ENCODE measurements at regions of chr22 and their contacts with region 1.

Region 1: DNA sequence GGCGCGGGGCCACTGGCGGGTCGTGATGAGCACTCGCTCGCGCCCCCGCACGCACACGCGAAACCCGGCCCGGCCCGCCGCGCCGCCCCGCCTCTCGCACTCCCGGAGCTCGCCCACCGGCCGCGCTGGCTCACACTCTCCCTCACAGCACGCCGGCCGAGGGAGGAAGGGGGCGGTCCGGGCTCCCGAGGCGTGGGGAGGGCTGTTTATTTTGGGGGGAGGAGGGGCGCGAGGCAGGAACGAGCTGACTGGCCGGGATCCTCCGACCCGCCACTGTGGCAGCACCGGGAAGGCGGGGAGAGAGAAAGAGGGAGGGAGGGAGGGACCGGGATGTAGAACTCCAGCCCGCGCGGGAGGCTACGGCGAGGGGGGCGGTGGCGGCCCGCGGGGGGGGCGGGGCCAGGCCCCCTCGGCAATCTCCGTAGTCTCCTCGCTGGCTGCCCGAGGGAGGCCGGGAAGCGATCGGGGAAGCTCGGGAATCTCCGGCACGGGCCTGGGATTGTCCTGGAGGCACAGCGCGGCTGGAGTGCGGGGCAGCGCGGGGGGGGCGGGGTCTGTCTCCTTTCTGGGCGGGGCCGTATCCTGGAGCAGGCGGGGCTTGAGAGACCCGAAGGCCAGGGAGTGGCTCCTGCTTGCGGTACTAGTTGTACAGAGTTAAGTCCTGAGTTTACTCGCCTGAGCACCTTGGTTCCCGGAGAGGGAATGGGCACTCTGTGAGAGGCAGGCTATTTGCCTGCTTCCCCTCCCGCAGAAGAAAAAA is at the start of gene RBFOX2:
- DNase-seq: peak; percentile 95
- ATAC-seq: peak; percentile 93
- H3K4me3 ChIP-seq: peak within 1 kb of the TSS; percentile 98
- H3K27ac ChIP-seq: peak within 1 kb of the TSS; percentile 95
- H3K4me1 ChIP-seq: peaks cover 4% of the 10 kb centered on the region
- H3K27me3 ChIP-seq: no peaks in the 10 kb centered on the region
- CTCF ChIP-seq: no peak
- POLR2A ChIP-seq: peak; percentile 52; the same call in 1 of the 2 replicates
- RAD21 ChIP-seq: no peak
- total RNA-seq, gene RBFOX2: 178 and 227 TPM in 2 replicates

Region 2: GRCh38 chr22:35008213-35008612 is 1020.6 kb before region 1 on chr22:
- CTCF ChIA-PET with region 1: no interaction called
- POLR2A ChIA-PET with region 1: no interaction called
- dilution Hi-C with region 1: no loop called
- in situ Hi-C with region 1: no loop called
- intact Hi-C with region 1: no loop called
- DNase-seq: no peak
- ATAC-seq: no peak
- H3K4me3 ChIP-seq: no peak overlapping the region
- H3K27ac ChIP-seq: no peak overlapping the region
- H3K4me1 ChIP-seq: no peaks in the 10 kb centered on the region
- H3K27me3 ChIP-seq: no peaks in the 10 kb centered on the region
- CTCF ChIP-seq: no peak
- POLR2A ChIP-seq: no peak
- RAD21 ChIP-seq: no peak

Region 3: DNA sequence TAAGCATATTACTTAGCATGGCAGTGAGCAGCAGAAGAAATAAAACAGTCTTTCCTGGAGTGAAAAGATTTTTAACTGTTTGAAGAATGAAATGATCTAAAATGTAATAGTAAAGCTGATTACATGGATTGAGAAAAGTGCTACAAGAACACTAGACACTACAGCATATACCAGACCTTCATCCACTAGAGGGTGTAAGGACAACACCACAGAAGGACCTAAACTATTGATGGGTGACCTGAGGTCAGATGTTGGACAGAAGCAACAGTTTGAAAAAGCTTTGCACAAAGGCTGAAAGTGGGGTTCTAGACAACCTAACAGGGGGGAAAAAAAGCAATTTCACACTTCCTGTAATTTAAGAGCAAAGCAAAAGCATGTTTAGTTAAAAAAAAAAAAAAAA is 97.9 kb before region 1 on chr22:
- CTCF ChIA-PET with region 1: no interaction called
- POLR2A ChIA-PET with region 1: no interaction called
- dilution Hi-C with region 1: no loop called
- in situ Hi-C with region 1: no loop called
- intact Hi-C with region 1: loop called (anchors 2 kb)
- DNase-seq: peak; percentile 80
- ATAC-seq: peak; percentile 94
- H3K4me3 ChIP-seq: no peak overlapping the region
- H3K27ac ChIP-seq: no peak overlapping the region
- H3K4me1 ChIP-seq: peaks cover 4% of the 10 kb centered on the region
- H3K27me3 ChIP-seq: no peaks in the 10 kb centered on the region
- CTCF ChIP-seq: peak; percentile 78
- POLR2A ChIP-seq: no peak
- RAD21 ChIP-seq: peak; percentile 89

Region 4: GRCh38 chr22:35961480-35962295 is 67.1 kb before region 1 on chr22:
- CTCF ChIA-PET with region 1: interaction called, 3 read pairs
- POLR2A ChIA-PET with region 1: no interaction called
- dilution Hi-C with region 1: no loop called
- in situ Hi-C with region 1: no loop called
- intact Hi-C with region 1: loop called (anchors 5 kb)
- DNase-seq: peak; percentile 90
- ATAC-seq: peak; percentile 96
- H3K4me3 ChIP-seq: no peak overlapping the region
- H3K27ac ChIP-seq: peak overlapping the region; percentile 50; the same call in 1 of the 2 replicates
- H3K4me1 ChIP-seq: peaks cover 12% of the 10 kb centered on the region
- H3K27me3 ChIP-seq: no peaks in the 10 kb centered on the region
- CTCF ChIP-seq: no peak
- POLR2A ChIP-seq: no peak
- RAD21 ChIP-seq: no peak

Region 5: DNA sequence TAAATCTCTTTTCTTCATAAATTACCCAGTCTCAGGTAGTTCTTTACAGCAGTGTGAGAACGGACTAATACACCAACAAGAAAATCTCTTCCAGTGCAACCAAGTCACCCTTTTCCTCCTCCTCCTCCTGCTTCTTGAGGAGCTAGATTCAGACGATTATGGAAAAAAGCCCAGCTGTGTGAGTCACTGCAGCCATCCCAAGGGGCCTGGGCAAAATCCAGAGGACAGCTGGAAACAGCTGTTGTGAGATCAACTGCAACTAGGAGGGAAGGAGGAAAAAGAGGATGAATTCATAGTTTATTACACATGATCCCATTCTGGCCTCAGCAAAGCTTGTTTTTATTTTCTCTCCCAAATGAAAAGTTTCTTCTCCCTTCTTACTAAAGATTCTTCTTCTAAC is 33.1 kb before region 1 on chr22:
- CTCF ChIA-PET with region 1: interaction called, 4 read pairs
- POLR2A ChIA-PET with region 1: interaction called, 8 read pairs
- dilution Hi-C with region 1: no loop called
- in situ Hi-C with region 1: no loop called
- intact Hi-C with region 1: loop called (anchors 5 kb)
- DNase-seq: peak; percentile 99
- ATAC-seq: peak; percentile 77
- H3K4me3 ChIP-seq: peak overlapping the region; percentile 2; the same call in 1 of the 2 replicates
- H3K27ac ChIP-seq: peak overlapping the region; percentile 93
- H3K4me1 ChIP-seq: peaks cover 23% of the 10 kb centered on the region
- H3K27me3 ChIP-seq: no peaks in the 10 kb centered on the region
- CTCF ChIP-seq: no peak
- POLR2A ChIP-seq: no peak
- RAD21 ChIP-seq: peak; percentile 31

Region 6: DNA sequence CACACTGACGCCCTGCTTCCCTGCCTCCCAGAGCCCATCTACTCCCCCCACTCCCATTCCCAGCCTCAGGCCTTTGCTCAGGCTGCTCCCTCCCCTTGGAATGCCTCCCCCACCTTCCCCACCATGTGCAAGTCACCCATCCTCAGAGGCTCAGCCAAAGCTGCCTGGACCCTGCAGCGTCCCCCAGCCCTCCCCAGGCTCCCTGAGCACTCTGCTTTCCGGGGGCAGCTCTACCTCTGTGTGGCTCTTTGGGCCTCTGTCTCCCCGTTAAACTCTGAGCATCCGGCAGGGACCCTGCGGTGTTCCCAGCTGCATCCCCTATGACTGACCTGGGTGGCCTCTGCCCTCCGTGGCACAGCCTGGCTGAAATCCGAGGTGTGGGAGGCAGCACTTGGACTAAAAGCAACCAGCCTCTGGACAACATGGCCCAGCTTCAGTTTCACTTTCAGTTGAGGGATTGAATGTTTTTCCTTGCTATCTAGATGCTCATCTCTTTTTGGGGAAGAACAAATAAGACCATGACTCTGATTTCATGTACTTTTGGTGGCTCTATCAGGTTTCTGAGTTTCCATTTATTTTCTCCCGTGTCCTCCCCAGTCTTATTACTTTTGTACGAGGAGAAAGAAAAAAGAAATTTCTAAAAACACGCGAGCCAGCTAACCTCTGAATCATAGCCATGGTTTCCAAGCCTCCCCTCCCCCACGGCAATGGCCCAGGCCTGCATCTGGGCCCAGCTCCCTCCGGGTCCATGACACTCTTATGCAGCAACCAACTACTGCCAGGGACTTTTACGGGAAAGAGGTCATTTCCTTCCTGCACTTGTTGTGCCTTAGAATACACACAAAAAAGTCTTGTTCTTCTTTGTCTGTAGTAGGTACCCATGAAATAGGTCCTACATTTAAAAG is 127.9 kb after region 1 on chr22:
- CTCF ChIA-PET with region 1: no interaction called
- POLR2A ChIA-PET with region 1: no interaction called
- dilution Hi-C with region 1: no loop called
- in situ Hi-C with region 1: no loop called
- intact Hi-C with region 1: no loop called
- DNase-seq: peak; percentile 77
- ATAC-seq: peak; percentile 90
- H3K4me3 ChIP-seq: peak overlapping the region; percentile 39
- H3K27ac ChIP-seq: peak overlapping the region; percentile 76
- H3K4me1 ChIP-seq: peaks cover 13% of the 10 kb centered on the region; the same call in 1 of the 2 replicates
- H3K27me3 ChIP-seq: no peaks in the 10 kb centered on the region
- CTCF ChIP-seq: no peak
- POLR2A ChIP-seq: no peak
- RAD21 ChIP-seq: no peak

Measured in IMR-90 (cell line).